ENCODE measurements at regions of chr1 and their contacts with region 1.

Region 1: GRCh38 chr1:246583056-246583848 is 17.0 kb downstream of the CNST start:
- DNase-seq: no peak
- ATAC-seq: no peak
- H3K4me3 ChIP-seq: no peak overlapping the region
- H3K4me3 Mint-ChIP-seq: peak overlapping the region in 1 of 3 donors; percentile 40
- H3K27ac ChIP-seq: no peak overlapping the region
- H3K27ac Mint-ChIP-seq: peak overlapping the region in 1 of 2 donors; percentile 12
- H3K4me1 ChIP-seq: peaks cover 18 to 24% of the 10 kb centered on the region in 2 experiments
- H3K4me1 Mint-ChIP-seq: peaks cover 83 to 85% (median 84%) of the 10 kb centered on the region in 3 donors
- H3K27me3 ChIP-seq: no peaks in the 10 kb centered on the region
- H3K27me3 Mint-ChIP-seq: no peaks in the 10 kb centered on the region

Region 2: GRCh38 chr1:246733704-246734103 is 150.5 kb after region 1 on chr1:
- CTCF ChIA-PET with region 1: interaction called in 1 of 2 experiments, 10 read pairs
- POLR2A ChIA-PET with region 1: no interaction called
- DNase-seq: no peak
- ATAC-seq: no peak
- H3K4me3 ChIP-seq: no peak overlapping the region
- H3K4me3 Mint-ChIP-seq: no peak overlapping the region
- H3K27ac ChIP-seq: no peak overlapping the region
- H3K27ac Mint-ChIP-seq: no peak overlapping the region
- H3K4me1 ChIP-seq: no peaks in the 10 kb centered on the region
- H3K4me1 Mint-ChIP-seq: no peaks in the 10 kb centered on the region
- H3K27me3 ChIP-seq: no peaks in the 10 kb centered on the region
- H3K27me3 Mint-ChIP-seq: no peaks in the 10 kb centered on the region

Measured in T-cell (primary cell).